ENCODE measurements at regions of chr15 and their contacts with region 1.

Region 1: DNA sequence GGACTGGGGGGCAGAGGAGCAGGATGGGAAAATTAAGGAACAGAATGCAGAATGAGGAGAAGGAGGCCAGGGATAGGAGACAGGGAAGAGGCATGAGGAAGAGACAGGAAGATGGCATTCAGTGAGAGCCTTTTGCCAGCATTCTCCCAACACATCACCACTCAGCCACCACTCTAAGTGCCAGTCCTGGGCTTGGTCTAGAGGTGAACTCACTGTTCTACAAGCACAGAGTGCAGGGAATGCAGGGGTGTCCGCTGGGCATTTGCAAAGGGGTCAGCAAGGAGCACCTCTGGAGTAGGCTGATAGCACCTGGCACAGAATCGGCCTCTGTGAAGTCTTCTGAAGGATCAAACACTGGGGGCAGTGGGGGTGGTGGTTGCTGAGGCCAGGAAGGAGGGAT is 14.6 kb upstream of the IGDCC3 start:
- DNase-seq: no peak
- CTCF ChIP-seq: no peak

Region 2: DNA sequence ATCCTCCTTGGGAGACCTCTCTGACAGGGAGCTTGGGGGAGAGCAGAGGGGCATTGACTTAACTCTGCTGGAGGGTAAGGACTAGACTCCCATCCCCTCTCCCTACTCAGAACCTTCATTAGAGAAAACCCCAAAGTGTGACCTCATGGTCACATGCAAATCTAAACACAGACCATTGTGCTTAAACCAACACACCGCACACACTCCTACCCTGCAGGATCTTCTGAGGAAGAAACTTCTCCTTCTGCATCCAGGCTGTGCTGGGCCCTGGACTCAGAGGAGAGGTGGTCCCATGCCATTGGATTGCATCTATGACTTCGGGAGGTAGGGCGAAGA is 104.9 kb before region 1 on chr15:
- in situ Hi-C with region 1: no loop called
- DNase-seq: peak; percentile 30
- CTCF ChIP-seq: no peak

Region 3: DNA sequence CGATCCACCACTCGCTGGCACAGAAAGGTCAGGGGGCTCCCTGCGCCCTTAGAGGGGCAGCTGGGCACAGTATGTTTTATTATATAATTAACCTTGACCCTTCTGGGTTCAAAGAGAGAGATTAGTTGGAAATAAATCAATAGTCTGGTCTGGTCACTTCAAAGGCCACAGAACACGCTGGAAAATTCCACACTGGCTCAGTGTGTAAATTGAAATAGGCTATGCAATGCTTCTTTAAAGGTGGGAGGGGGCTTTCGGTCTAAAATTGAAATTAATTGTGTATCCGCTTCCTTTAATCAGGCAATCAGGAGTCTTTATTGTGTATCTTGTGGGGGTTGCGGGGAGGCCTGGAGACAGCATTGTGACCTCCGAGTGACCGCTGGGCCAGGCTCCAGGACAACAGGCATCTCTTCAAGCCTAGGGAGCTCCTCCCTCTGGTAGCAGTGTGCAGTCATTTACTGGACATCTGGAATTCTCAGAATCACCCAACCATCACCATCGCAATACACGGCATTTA is 79.9 kb before region 1 on chr15:
- in situ Hi-C with region 1: no loop called
- DNase-seq: no peak
- CTCF ChIP-seq: no peak

Region 4: GRCh38 chr15:65323071-65323511 is 69.3 kb before region 1 on chr15:
- in situ Hi-C with region 1: loop called (anchors 5 kb)
- DNase-seq: peak; percentile 23
- CTCF ChIP-seq: no peak